ENCODE measurements at regions of chr11 and their contacts with region 1.

Region 1: DNA sequence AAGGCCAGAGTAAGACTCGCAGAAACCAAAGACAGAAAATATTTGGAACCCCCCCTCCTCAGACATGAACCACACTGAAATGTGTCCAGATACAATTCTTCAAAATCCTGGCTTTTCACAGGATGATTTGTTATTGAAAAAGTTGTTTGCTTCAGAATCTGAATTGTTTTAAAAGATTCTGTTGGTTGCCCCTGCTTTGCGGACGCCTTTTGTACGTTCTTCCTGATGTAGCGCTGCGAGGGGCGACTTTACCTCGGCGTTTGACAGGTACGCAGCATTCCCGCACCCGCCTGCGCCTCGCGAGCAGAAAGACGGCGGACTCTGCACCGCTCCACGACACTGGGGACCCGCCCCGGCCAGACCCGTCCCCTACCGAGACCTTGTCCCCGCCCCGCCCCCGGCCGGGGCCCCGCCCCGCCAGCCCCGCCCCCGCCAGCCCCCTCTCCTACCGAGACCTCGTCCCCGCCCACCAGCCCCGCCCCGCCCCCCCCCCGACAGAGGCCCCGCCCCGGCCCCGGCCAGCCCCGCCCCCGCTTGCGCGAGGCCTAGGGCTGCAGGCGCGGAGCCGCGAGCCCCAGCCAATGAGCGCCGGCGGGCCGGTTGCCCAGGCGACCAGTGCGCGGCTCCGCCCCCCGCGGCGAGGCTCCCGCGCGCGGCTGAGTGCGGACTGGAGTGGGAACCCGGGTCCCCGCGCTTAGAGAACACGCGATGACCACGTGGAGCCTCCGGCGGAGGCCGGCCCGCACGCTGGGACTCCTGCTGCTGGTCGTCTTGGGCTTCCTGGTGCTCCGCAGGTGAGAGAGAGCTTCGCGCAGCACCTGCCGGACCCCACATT is at the start of gene GLB1L2:
- DNase-seq: peak; percentile 89
- H3K4me3 ChIP-seq: peak within 1 kb of the TSS; percentile 48 to 69 (median 58)
- H3K27ac ChIP-seq: peak within 1 kb of the TSS; percentile 68 to 77 (median 72)
- H3K4me1 ChIP-seq: peaks cover 0 to 37% (median 21%) of the 10 kb centered on the region in 4 donors
- H3K27me3 ChIP-seq: no peaks in the 10 kb centered on the region
- CTCF ChIP-seq: no peak
- EP300 ChIP-seq: no peak
- POLR2A ChIP-seq: peak; percentile 47 to 58
- total RNA-seq, gene GLB1L2: 30.8 to 108 (median 51.0) TPM

Region 2: DNA sequence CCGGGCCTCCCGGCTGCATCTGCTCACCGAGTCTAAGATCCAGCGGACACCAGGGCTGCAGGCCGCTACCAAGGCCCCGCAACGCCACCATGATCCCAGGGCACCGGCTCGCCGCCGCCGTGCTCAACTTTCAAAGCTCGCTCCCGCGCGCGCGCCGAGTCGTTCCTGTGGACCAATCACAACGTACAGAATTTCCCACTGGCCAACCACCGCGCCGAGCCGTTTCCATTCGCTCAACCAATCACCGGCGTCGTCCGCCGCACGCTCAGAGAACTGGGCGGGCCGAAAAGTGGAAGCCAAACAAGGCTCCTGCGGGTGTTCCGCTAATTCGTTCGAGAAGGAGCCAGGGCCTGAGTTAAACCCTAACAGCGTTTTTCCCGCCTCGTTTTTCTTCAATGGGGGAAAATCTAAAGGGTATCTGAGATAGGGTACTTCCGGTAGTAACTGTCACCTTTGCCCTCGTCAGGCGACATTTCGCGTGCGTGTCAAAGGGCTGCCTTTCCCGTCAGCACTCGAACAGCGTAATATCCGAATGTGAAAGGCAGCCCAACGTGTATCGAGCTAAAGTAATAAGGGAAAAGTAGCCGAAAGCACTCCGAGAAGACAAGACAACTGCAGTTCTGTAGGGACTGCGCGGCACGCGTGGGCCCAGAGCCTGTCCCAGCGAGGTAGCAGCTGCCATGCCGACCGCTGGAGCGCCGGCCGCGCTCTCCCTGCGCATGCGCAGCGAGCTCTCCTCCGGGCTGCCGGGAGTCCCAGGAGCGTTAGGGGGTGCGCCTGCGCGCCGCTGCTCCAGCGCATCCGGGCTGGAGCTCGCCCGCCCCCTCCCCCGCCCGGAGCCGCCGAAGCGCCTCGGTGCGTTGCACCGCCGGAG is 107.5 kb before region 1 on chr11 and contains the starts of genes NCAPD3 and VPS26B:
- intact Hi-C with region 1: loop called (anchors 1 kb)
- DNase-seq: peak; percentile 98
- H3K4me3 ChIP-seq: peak within 1 kb of the TSS; percentile 69 to 94 (median 82)
- H3K27ac ChIP-seq: peak within 1 kb of the TSS; percentile 95 to 97 (median 96)
- H3K4me1 ChIP-seq: peaks cover 0 to 42% (median 32%) of the 10 kb centered on the region in 4 donors
- H3K27me3 ChIP-seq: no peaks in the 10 kb centered on the region
- CTCF ChIP-seq: no peak
- EP300 ChIP-seq: peak in 1 of 4 donors; percentile 21
- POLR2A ChIP-seq: peak; percentile 98 to 99
- total RNA-seq, gene NCAPD3: 6.4 to 8.9 (median 8.0) TPM
- total RNA-seq, gene VPS26B: 35.7 to 53.7 (median 37.3) TPM

Region 3: DNA sequence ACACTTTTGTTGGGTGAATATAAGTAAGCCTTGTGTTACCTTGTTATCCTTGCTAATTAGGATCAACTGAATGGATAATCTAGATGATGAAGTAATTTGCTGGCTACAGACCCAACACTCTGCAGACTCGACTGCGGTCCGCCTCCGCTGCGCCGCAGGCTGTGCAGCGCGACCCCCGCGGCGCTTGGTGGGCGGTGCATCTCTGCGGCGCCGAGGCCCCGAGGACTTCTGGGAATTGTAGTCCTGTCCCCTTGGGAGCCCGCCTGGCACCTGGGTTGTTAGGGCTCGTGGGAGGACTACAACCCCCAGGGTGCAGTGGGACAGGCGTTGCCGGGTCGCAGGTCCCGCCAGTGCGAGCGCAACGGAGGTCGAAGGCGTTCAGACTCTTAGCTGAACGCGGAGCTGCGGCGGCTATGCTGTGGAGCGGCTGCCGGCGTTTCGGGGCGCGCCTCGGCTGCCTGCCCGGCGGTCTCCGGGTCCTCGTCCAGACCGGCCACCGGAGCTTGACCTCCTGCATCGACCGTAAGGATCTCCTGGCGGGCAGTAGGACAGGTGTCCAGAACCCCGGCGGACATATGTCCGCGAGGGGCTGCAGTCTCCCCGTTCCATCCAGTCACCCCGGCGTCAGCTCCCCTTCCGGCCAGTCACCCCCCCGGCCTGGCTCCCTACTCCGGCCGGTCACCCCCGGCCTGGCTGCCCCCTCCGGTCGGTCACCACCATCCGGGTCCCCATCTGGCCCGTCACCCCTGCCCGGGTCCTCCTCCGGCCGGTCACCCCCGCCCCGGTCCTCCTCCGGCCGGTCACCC is 78.2 kb before region 1 on chr11 and contains the starts of genes ACAD8 and THYN1:
- intact Hi-C with region 1: loop called (anchors 5 kb)
- DNase-seq: peak; percentile 99
- H3K4me3 ChIP-seq: peak within 1 kb of the TSS; percentile 66 to 97 (median 84)
- H3K27ac ChIP-seq: peak within 1 kb of the TSS; percentile 76 to 82 (median 77)
- H3K4me1 ChIP-seq: peaks cover 0 to 30% (median 21%) of the 10 kb centered on the region in 4 donors
- H3K27me3 ChIP-seq: no peaks in the 10 kb centered on the region
- CTCF ChIP-seq: peak; percentile 21 to 65 (median 24)
- EP300 ChIP-seq: no peak
- POLR2A ChIP-seq: peak; percentile 68 to 83
- total RNA-seq, gene ACAD8: 25.5 to 30.1 (median 26.9) TPM
- total RNA-seq, gene THYN1: 69.9 to 92.2 (median 74.4) TPM

Region 4: GRCh38 chr11:134275534-134276395 is 55.8 kb before region 1 on chr11 and contains the start of gene GLB1L3:
- intact Hi-C with region 1: loop called (anchors 5 kb)
- DNase-seq: no peak
- H3K4me3 ChIP-seq: peak within 1 kb of the TSS; percentile 5 to 45 (median 38)
- H3K27ac ChIP-seq: peak within 1 kb of the TSS in 3 of 4 donors; percentile 13 to 43 (median 39)
- H3K4me1 ChIP-seq: peaks cover 0 to 23% (median 18%) of the 10 kb centered on the region in 4 donors
- H3K27me3 ChIP-seq: peaks cover 45 to 80% (median 76%) of the 10 kb centered on the region in 3 donors
- CTCF ChIP-seq: peak in 2 of 4 experiments; percentile 23 to 36
- EP300 ChIP-seq: no peak
- POLR2A ChIP-seq: no peak
- total RNA-seq, gene GLB1L3: 0.82 to 8.9 (median 4.1) TPM

Region 5: GRCh38 chr11:134385773-134386565 is 54.4 kb after region 1 on chr11:
- intact Hi-C with region 1: no loop called
- DNase-seq: no peak
- H3K4me3 ChIP-seq: no peak overlapping the region
- H3K27ac ChIP-seq: no peak overlapping the region
- H3K4me1 ChIP-seq: no peaks in the 10 kb centered on the region
- H3K27me3 ChIP-seq: peaks cover 0 to 51% (median 0%) of the 10 kb centered on the region in 3 donors
- CTCF ChIP-seq: no peak
- EP300 ChIP-seq: no peak
- POLR2A ChIP-seq: no peak

Region 6: GRCh38 chr11:134504146-134504905 is 172.8 kb after region 1 on chr11:
- intact Hi-C with region 1: no loop called
- DNase-seq: no peak
- H3K4me3 ChIP-seq: no peak overlapping the region
- H3K27ac ChIP-seq: no peak overlapping the region
- H3K4me1 ChIP-seq: no peaks in the 10 kb centered on the region
- H3K27me3 ChIP-seq: peaks cover 0 to 6% (median 0%) of the 10 kb centered on the region in 3 donors
- CTCF ChIP-seq: no peak
- EP300 ChIP-seq: no peak
- POLR2A ChIP-seq: no peak